Activated B cell treated with CpG ODN at 0.5 μM for 24 hours (primary cell): ENCODE measurements at regions of chr20 and their contacts with region 1.

Region 1: DNA sequence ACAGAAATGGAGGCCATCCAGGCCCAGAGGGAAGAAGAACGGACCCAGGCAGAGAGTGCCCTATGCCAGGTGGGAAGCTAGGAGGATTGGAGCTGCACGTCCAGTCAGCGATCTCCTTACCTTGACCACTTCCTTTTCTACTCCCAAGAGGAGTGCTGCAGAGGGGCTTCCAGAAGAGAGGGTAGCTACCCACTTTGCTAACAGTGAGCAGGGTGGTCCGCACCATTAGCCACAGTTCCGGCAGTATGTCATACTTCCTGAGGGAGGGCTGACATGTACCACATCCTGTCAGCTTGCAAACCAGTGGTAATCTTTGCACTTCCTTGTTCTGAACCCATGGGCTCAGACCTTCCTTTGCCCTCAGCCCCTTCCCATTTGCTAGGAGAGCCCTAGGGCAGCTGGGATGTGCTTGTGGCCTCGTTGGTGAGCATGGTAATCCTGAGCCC is 35.4 kb downstream of the CEP250 start:
- DNase-seq: peak; percentile 44
- ATAC-seq: peak; percentile 99
- H3K4me3 Mint-ChIP-seq: peak overlapping the region; percentile 98
- H3K27ac Mint-ChIP-seq: peak overlapping the region; percentile 98
- H3K4me1 Mint-ChIP-seq: peaks cover 45% of the 10 kb centered on the region
- H3K27me3 Mint-ChIP-seq: no peaks in the 10 kb centered on the region
- CTCF ChIP-seq: no peak

Region 2: GRCh38 chr20:35454881-35455609 is 35.7 kb before region 1 on chr20 and contains the start of gene CEP250:
- CTCF ChIA-PET with region 1: no interaction called
- POLR2A ChIA-PET with region 1: interaction called, 17 read pairs
- intact Hi-C with region 1: loop called (anchors 2 kb)
- DNase-seq: peak; percentile 90
- ATAC-seq: peak; percentile 99
- H3K4me3 Mint-ChIP-seq: peak within 1 kb of the TSS; percentile 93
- H3K27ac Mint-ChIP-seq: peak within 1 kb of the TSS; percentile 99
- H3K4me1 Mint-ChIP-seq: peaks cover 12% of the 10 kb centered on the region
- H3K27me3 Mint-ChIP-seq: no peaks in the 10 kb centered on the region
- CTCF ChIP-seq: no peak
- total RNA-seq, gene CEP250: 49.6 and 54.7 TPM in 2 replicates

Region 3: GRCh38 chr20:35502352-35502751 is 11.6 kb after region 1 on chr20:
- CTCF ChIA-PET with region 1: interaction called, 3 read pairs
- POLR2A ChIA-PET with region 1: interaction called, 29 read pairs
- intact Hi-C with region 1: loop called (anchors 1 kb)
- DNase-seq: peak; percentile 49
- ATAC-seq: peak; percentile 95
- H3K4me3 Mint-ChIP-seq: peak overlapping the region; percentile 44
- H3K27ac Mint-ChIP-seq: peak overlapping the region; percentile 68
- H3K4me1 Mint-ChIP-seq: peaks cover 55% of the 10 kb centered on the region
- H3K27me3 Mint-ChIP-seq: no peaks in the 10 kb centered on the region
- CTCF ChIP-seq: no peak

Region 4: GRCh38 chr20:35523298-35523888 is 32.6 kb after region 1 on chr20:
- CTCF ChIA-PET with region 1: no interaction called
- POLR2A ChIA-PET with region 1: no interaction called
- intact Hi-C with region 1: loop called (anchors 1 kb)
- DNase-seq: no peak
- ATAC-seq: peak; percentile 61
- H3K4me3 Mint-ChIP-seq: no peak overlapping the region
- H3K27ac Mint-ChIP-seq: no peak overlapping the region
- H3K4me1 Mint-ChIP-seq: no peaks in the 10 kb centered on the region
- H3K27me3 Mint-ChIP-seq: no peaks in the 10 kb centered on the region
- CTCF ChIP-seq: no peak

Region 5: DNA sequence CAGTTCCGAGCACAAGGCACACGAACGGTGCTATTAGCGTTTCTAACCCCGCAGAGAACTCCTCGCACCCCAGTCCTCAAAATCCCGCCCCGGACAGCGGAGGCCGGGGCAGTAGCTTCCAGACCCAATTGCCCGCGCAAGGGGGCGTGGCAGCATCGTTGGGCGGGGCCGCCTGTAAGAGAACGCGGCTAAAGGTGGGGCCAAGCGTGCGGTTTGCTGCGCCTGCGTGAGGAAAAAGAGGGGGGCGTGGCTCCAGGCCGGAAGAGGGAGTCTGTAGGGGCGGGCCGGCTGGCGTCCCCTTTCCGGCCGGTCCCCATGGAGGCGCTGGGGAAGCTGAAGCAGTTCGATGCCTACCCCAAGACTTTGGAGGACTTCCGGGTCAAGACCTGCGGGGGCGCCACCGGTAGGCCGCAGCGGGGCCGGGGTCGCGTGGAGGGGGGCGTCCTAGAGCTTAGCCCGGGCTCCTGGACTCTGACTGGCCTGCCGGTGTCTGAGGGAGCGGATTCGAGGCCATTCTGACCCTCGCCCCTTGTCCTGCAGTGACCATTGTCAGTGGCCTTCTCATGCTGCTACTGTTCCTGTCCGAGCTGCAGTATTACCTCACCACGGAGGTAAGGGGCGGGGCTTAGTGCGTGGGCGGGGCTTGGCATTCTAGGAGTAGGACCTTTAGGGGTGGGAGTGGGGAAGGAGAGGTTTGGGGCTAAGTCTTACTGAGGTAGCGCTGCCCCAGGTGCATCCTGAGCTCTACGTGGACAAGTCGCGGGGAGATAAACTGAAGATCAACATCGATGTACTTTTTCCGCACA is 51.2 kb after region 1 on chr20 and contains the start of gene ERGIC3:
- CTCF ChIA-PET with region 1: interaction called, 3 read pairs
- POLR2A ChIA-PET with region 1: interaction called, 11 read pairs
- intact Hi-C with region 1: loop called (anchors 1 kb)
- DNase-seq: peak; percentile 97
- ATAC-seq: peak; percentile 92
- H3K4me3 Mint-ChIP-seq: peak within 1 kb of the TSS; percentile 92
- H3K27ac Mint-ChIP-seq: peak within 1 kb of the TSS; percentile 77
- H3K4me1 Mint-ChIP-seq: peaks cover 21% of the 10 kb centered on the region
- H3K27me3 Mint-ChIP-seq: no peaks in the 10 kb centered on the region
- CTCF ChIP-seq: no peak
- total RNA-seq, gene ERGIC3: 159 and 183 TPM in 2 replicates

Region 6: GRCh38 chr20:35726759-35727711 is 236.3 kb after region 1 on chr20:
- CTCF ChIA-PET with region 1: no interaction called
- POLR2A ChIA-PET with region 1: interaction called, 10 read pairs
- intact Hi-C with region 1: no loop called
- DNase-seq: no peak
- ATAC-seq: no peak
- H3K4me3 Mint-ChIP-seq: no peak overlapping the region
- H3K27ac Mint-ChIP-seq: no peak overlapping the region
- H3K4me1 Mint-ChIP-seq: peaks cover 10% of the 10 kb centered on the region
- H3K27me3 Mint-ChIP-seq: no peaks in the 10 kb centered on the region
- CTCF ChIP-seq: no peak